HEK293T (cell line): ENCODE measurements at regions of chr10 and their contacts with region 1.

Region 1: DNA sequence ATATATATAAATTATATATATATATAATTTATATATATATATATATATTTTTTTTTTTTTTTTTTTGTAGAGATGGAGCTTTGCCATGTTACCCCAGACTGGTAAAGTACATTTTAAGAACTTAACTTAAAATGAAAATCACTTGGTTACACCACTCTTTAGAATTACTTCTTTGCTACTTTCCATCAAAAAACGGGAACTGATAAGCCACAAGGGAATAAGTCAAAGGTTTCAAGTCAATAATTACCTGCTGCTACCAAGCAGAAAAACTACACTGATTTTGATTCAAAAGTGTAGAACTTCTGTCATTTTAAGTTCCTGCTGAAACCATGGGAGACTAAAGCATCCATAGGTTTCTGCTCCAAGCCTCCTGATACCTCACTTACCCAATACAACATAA is 12.2 kb downstream of the PPA1 start:
- DNase-seq: no peak

Region 2: GRCh38 chr10:70052462-70053217 is 168.4 kb before region 1 on chr10 and contains the start of gene MACROH2A2:
- CTCF ChIA-PET with region 1: no interaction called
- POLR2A ChIA-PET with region 1: no interaction called
- DNase-seq: peak; percentile 80

Region 3: DNA sequence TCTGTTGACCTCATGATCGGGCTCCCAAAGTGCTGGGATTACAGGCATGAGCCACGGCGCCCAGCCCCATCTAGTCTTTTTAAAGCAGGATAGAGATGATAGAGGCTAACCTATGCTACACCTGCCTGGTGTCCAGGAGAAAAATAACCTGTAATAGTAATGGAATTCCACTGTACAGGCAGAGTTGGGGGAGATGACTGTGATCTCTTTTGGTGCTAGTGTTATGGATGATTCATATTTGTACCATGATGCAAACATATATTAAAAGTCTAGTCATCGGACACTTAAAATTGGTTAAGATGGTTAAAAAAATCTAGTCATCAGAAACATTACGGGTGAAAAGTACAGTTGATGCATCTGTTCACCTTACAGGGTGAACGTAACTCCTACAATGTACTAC is 44.6 kb before region 1 on chr10:
- CTCF ChIA-PET with region 1: no interaction called
- POLR2A ChIA-PET with region 1: no interaction called
- DNase-seq: no peak

Region 4: DNA sequence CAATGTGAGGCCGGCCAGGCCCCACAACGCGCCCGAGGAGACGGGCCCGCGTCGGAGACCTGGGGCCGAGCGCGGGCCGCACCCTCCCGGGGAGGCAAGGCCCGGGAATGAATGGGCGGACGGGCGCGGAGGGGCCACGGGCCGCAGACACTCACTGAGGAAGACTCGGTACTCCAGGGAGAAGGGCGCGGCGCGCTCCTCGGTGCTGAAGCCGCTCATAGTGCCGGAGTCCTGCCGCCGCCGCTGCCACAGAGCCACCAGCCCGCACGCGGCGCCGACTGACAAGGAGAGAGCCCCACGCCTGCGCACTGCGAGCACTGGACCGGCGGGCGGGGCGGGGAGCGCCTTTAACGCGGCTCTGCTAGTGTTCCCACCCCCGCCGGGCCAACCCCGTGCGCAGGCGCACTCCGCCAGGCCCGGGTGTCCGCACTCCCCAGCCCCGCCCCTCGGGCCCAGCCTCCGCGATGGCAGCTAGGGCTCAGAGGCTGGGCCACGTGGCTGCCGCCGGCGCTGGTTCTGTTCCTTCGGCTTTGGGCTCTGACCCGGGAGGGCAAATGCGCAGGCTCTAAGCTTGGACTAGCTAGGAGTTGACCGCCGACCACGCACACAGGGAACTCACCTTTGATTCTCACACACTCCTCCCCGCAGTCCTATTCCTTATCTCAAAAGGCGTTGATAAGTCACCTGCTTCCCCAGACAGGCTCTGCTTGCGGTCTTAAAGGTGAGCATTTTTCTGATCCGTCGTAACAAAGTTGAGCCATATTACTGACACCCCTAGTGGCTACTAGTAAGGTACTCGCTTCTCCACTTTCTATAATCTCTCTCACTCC is 12.3 kb after region 1 on chr10 and contains the start of gene PPA1:
- CTCF ChIA-PET with region 1: interaction called, 13 read pairs
- POLR2A ChIA-PET with region 1: interaction called, 24 read pairs
- DNase-seq: peak; percentile 100

Region 5: GRCh38 chr10:70348228-70348850 is 127.3 kb after region 1 on chr10:
- CTCF ChIA-PET with region 1: interaction called, 16 read pairs
- POLR2A ChIA-PET with region 1: no interaction called
- DNase-seq: peak; percentile 69

Region 6: DNA sequence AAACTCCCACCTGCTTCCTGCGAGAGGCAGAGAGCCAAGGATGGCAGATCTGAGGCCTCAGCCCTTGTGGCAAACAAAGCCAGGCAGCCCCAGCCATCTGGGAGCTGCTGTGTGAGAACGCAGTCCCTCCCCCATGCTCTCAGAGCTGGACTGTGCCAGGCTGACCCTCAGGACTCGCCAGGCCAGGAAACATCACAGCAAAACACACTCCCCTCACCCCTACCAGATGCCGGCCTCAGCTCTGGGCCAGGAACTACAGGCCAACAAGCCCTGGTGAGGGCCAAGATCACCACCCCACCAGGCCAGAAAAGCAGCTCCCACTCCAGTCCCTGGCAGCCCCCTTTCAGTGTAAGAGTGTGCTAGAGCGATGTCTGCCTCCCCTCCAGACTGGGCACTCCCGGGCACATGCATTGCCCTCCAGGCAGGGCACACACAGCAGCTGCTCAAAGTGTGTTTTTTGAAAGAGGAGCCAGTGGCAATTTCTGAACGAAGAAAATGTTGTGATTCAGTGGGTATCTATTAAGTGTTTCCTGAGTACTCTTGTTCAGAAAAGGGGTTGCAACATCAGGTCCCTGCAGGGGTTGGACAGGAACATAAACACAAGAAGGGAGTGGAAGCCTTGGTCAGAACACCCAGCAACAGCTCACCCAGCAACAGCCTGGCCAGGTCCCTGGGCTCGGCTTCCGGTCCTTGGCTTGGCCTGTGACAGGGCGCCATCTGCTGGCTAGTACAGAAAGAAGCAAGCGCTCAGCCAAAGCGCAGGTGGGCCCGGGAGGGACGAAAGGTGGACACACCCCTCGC is 143.1 kb after region 1 on chr10:
- CTCF ChIA-PET with region 1: interaction called, 37 read pairs
- POLR2A ChIA-PET with region 1: interaction called, 4 read pairs
- DNase-seq: peak; percentile 90

Region 7: DNA sequence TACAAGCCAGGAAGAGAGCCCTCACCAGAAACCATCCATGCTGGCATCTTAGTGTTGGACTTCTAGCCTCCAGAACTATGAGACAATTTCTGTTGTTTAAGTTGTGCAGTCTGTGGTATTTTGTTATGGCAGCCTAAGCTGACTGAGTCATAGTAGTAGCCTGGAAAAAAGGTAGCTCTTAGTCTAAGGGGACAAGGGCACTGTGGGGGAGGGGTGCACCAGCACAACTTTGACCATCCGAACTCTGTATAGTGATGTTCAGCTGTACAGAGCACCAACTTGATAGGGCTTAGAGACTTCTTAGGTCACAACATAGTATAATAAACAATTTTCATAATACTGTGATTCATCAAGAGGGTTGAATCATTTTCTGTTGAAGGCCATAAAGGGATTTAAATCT is 197.2 kb after region 1 on chr10:
- CTCF ChIA-PET with region 1: no interaction called
- POLR2A ChIA-PET with region 1: no interaction called
- DNase-seq: no peak